ENCODE measurements at regions of chr14 and their contacts with region 1.

Region 1: GRCh38 chr14:67526676-67527459 is 6.2 kb upstream of the PLEKHH1 start:
- DNase-seq: peak in 7 of 9 experiments; percentile 14 to 66 (median 30)
- ATAC-seq: peak; percentile 66
- H3K4me3 ChIP-seq: no peak overlapping the region
- H3K4me3 Mint-ChIP-seq: no peak overlapping the region
- H3K27ac ChIP-seq: no peak overlapping the region
- H3K27ac Mint-ChIP-seq: no peak overlapping the region
- H3K4me1 ChIP-seq: no peaks in the 10 kb centered on the region
- H3K4me1 Mint-ChIP-seq: no peaks in the 10 kb centered on the region
- H3K27me3 ChIP-seq: peaks cover 0 to 6% of the 10 kb centered on the region in 2 experiments
- H3K27me3 Mint-ChIP-seq: peaks cover 17% of the 10 kb centered on the region
- CTCF ChIP-seq: peak; percentile 55

Region 2: GRCh38 chr14:67514650-67515385 is 12.1 kb before region 1 on chr14:
- CTCF ChIA-PET with region 1: interaction called, 36 read pairs
- POLR2A ChIA-PET with region 1: no interaction called
- intact Hi-C with region 1: no loop called
- DNase-seq: peak in 8 of 9 experiments; percentile 11 to 75 (median 43)
- ATAC-seq: peak; percentile 71
- H3K4me3 ChIP-seq: peak overlapping the region; percentile 71 to 75
- H3K4me3 Mint-ChIP-seq: peak overlapping the region; percentile 91
- H3K27ac ChIP-seq: peak overlapping the region; percentile 62 to 79
- H3K27ac Mint-ChIP-seq: peak overlapping the region; percentile 89
- H3K4me1 ChIP-seq: peaks cover 16% of the 10 kb centered on the region
- H3K4me1 Mint-ChIP-seq: peaks cover 36% of the 10 kb centered on the region
- H3K27me3 ChIP-seq: no peaks in the 10 kb centered on the region
- H3K27me3 Mint-ChIP-seq: no peaks in the 10 kb centered on the region
- CTCF ChIP-seq: no peak

Region 3: DNA sequence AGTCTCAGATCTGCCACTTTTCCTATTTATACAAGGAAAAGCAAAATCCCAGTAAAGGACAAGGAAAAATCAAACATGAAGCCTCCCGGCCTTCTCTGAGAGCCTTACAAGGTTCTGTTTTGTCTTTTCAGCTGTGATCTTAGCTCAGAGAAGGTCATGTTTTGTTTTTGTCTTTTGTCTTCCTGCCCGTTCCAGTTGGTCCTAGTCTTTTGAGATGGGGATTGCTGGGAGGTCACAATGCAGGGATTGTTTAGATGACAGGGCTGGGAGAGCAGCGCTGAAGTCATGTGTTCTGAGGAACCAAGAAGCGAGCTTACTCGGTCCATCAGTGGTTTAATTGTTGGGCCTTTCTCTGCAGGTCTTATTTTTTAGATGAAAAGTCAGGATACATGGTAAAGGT is 12.2 kb after region 1 on chr14:
- CTCF ChIA-PET with region 1: interaction called, 22 read pairs
- POLR2A ChIA-PET with region 1: interaction called, 3 read pairs
- intact Hi-C with region 1: no loop called
- DNase-seq: no peak
- ATAC-seq: no peak
- H3K4me3 ChIP-seq: no peak overlapping the region
- H3K4me3 Mint-ChIP-seq: no peak overlapping the region
- H3K27ac ChIP-seq: no peak overlapping the region
- H3K27ac Mint-ChIP-seq: no peak overlapping the region
- H3K4me1 ChIP-seq: no peaks in the 10 kb centered on the region
- H3K4me1 Mint-ChIP-seq: peaks cover 9% of the 10 kb centered on the region
- H3K27me3 ChIP-seq: no peaks in the 10 kb centered on the region
- H3K27me3 Mint-ChIP-seq: peaks cover 28% of the 10 kb centered on the region
- CTCF ChIP-seq: no peak

Region 4: GRCh38 chr14:67557126-67557525 is 30.3 kb after region 1 on chr14:
- CTCF ChIA-PET with region 1: interaction called, 10 read pairs
- POLR2A ChIA-PET with region 1: no interaction called
- intact Hi-C with region 1: no loop called
- DNase-seq: no peak
- ATAC-seq: no peak
- H3K4me3 ChIP-seq: no peak overlapping the region
- H3K4me3 Mint-ChIP-seq: no peak overlapping the region
- H3K27ac ChIP-seq: no peak overlapping the region
- H3K27ac Mint-ChIP-seq: no peak overlapping the region
- H3K4me1 ChIP-seq: no peaks in the 10 kb centered on the region
- H3K4me1 Mint-ChIP-seq: no peaks in the 10 kb centered on the region
- H3K27me3 ChIP-seq: no peaks in the 10 kb centered on the region
- H3K27me3 Mint-ChIP-seq: no peaks in the 10 kb centered on the region
- CTCF ChIP-seq: no peak

Region 5: GRCh38 chr14:67666750-67667449 is 140.0 kb after region 1 on chr14:
- CTCF ChIA-PET with region 1: interaction called, 4 read pairs
- POLR2A ChIA-PET with region 1: no interaction called
- intact Hi-C with region 1: loop called (anchors 1 to 10 kb)
- DNase-seq: peak in 4 of 9 experiments; percentile 26 to 76 (median 46)
- ATAC-seq: peak; percentile 91
- H3K4me3 ChIP-seq: no peak overlapping the region
- H3K4me3 Mint-ChIP-seq: no peak overlapping the region
- H3K27ac ChIP-seq: peak overlapping the region in 1 of 2 experiments; percentile 21
- H3K27ac Mint-ChIP-seq: no peak overlapping the region
- H3K4me1 ChIP-seq: peaks cover 25% of the 10 kb centered on the region
- H3K4me1 Mint-ChIP-seq: peaks cover 60% of the 10 kb centered on the region
- H3K27me3 ChIP-seq: no peaks in the 10 kb centered on the region
- H3K27me3 Mint-ChIP-seq: no peaks in the 10 kb centered on the region
- CTCF ChIP-seq: peak; percentile 61

Region 6: GRCh38 chr14:67963960-67964744 is 437.3 kb after region 1 on chr14:
- CTCF ChIA-PET with region 1: no interaction called
- POLR2A ChIA-PET with region 1: no interaction called
- intact Hi-C with region 1: no loop called
- DNase-seq: no peak
- ATAC-seq: no peak
- H3K4me3 ChIP-seq: no peak overlapping the region
- H3K4me3 Mint-ChIP-seq: no peak overlapping the region
- H3K27ac ChIP-seq: no peak overlapping the region
- H3K27ac Mint-ChIP-seq: no peak overlapping the region
- H3K4me1 ChIP-seq: no peaks in the 10 kb centered on the region
- H3K4me1 Mint-ChIP-seq: no peaks in the 10 kb centered on the region
- H3K27me3 ChIP-seq: no peaks in the 10 kb centered on the region
- H3K27me3 Mint-ChIP-seq: no peaks in the 10 kb centered on the region
- CTCF ChIP-seq: no peak

Region 7: GRCh38 chr14:68199554-68200151 is 672.8 kb after region 1 on chr14:
- CTCF ChIA-PET with region 1: no interaction called
- POLR2A ChIA-PET with region 1: no interaction called
- intact Hi-C with region 1: loop called in 1 of 2 experiments (anchors 5 kb)
- DNase-seq: no peak
- ATAC-seq: no peak
- H3K4me3 ChIP-seq: no peak overlapping the region
- H3K4me3 Mint-ChIP-seq: no peak overlapping the region
- H3K27ac ChIP-seq: no peak overlapping the region
- H3K27ac Mint-ChIP-seq: no peak overlapping the region
- H3K4me1 ChIP-seq: no peaks in the 10 kb centered on the region
- H3K4me1 Mint-ChIP-seq: peaks cover 7% of the 10 kb centered on the region
- H3K27me3 ChIP-seq: no peaks in the 10 kb centered on the region
- H3K27me3 Mint-ChIP-seq: no peaks in the 10 kb centered on the region
- CTCF ChIP-seq: no peak

Measured in CD8-positive, alpha-beta T cell (primary cell).